Activated B cell treated with CpG ODN at 0.5 μM for 24 hours (primary cell): ENCODE measurements at regions of chr16 and their contacts with region 1.

Region 1: GRCh38 chr16:11356573-11357331 is 11.5 kb downstream of the RMI2 start:
- DNase-seq: peak; percentile 46
- ATAC-seq: peak; percentile 30
- H3K4me3 Mint-ChIP-seq: no peak overlapping the region
- H3K27ac Mint-ChIP-seq: no peak overlapping the region
- H3K4me1 Mint-ChIP-seq: peaks cover 58% of the 10 kb centered on the region
- H3K27me3 Mint-ChIP-seq: peaks cover 21% of the 10 kb centered on the region
- CTCF ChIP-seq: no peak

Region 2: DNA sequence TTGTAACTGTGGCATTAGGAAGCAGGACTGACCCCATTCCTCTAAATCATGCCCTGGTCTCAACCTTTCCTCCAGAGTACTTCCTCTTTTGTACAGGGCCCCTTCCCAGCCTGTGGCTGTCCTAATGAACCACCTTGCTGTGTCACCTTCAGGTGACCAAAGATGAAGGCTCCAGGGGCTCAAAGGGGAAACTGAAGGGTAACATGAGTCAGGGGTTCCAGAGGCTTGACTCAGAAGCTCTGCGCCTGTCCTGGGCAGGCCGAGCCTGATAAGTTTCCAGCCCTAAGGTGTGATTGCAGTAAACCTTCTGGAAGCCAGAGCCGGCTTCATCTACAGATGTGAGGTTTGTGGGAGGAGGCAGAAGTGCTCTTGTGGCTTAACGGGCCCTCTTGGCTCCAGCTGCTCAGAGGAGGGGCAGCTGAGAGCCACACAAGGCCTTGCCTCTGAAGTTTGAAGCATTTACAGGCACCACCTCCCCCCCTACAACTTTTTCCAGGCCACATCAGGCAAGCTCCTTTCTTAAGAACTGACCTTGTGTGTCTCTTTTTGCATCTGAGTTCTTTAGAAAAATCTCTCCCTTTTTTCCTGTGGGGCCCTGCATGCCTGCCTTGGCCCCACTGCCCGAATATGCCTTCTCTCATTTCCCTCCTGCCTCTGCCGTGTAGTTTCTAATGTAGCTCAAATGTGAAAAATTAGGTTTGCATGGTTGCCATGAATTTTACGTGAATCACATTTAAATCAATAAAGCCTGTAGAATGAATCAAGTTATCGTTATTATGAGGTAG is 262.5 kb before region 1 on chr16:
- CTCF ChIA-PET with region 1: no interaction called
- POLR2A ChIA-PET with region 1: no interaction called
- intact Hi-C with region 1: loop called (anchors 5 kb)
- DNase-seq: no peak
- ATAC-seq: peak; percentile 67
- H3K4me3 Mint-ChIP-seq: peak overlapping the region; percentile 68
- H3K27ac Mint-ChIP-seq: peak overlapping the region; percentile 94
- H3K4me1 Mint-ChIP-seq: peaks cover 40% of the 10 kb centered on the region
- H3K27me3 Mint-ChIP-seq: no peaks in the 10 kb centered on the region
- CTCF ChIP-seq: no peak

Region 3: GRCh38 chr16:11283820-11284248 is 72.9 kb before region 1 on chr16:
- CTCF ChIA-PET with region 1: interaction called, 3 read pairs
- POLR2A ChIA-PET with region 1: interaction called, 8 read pairs
- intact Hi-C with region 1: loop called (anchors 2 kb)
- DNase-seq: no peak
- ATAC-seq: no peak
- H3K4me3 Mint-ChIP-seq: no peak overlapping the region
- H3K27ac Mint-ChIP-seq: no peak overlapping the region
- H3K4me1 Mint-ChIP-seq: peaks cover 46% of the 10 kb centered on the region
- H3K27me3 Mint-ChIP-seq: no peaks in the 10 kb centered on the region
- CTCF ChIP-seq: no peak

Region 4: DNA sequence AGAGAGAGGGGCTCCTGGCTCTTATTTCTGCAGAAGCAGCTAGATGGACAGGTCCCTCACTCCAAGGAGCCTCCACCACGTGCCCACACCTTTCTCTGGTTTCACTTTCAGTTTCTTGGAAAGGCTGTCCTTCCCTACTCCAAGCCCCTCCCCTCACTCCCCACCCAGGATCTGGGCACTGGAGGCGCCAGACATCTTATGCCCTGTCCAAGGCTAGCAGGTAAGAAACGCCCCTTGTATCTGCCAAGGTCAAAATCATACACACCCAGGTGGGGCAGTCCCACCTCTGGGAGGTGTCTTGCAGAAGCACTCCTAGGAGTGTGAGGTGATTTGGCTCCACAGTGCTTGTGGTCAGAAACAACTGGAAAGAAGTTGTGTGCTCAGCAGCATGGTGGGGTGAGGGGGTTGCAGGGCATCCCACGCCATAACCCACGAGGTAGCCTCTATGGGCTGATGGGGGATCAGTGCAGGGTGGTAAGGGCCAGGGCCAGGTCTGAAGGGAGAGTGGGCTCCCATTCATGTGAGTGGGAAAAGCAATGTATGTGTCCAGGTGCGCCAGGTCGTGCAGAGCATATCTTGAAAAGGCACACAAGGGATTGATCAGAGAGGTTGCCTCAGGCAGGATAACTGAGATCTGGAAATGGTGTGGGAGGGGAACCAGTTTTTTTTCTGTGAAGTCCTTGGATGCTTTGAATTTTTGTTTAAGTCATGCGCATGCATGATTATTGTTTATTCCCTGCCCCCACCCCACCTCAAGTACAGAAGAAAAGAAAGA is 43.8 kb before region 1 on chr16:
- CTCF ChIA-PET with region 1: interaction called, 16 read pairs
- POLR2A ChIA-PET with region 1: interaction called, 21 read pairs
- intact Hi-C with region 1: loop called (anchors 1 kb)
- DNase-seq: no peak
- ATAC-seq: no peak
- H3K4me3 Mint-ChIP-seq: no peak overlapping the region
- H3K27ac Mint-ChIP-seq: peak overlapping the region; percentile 47
- H3K4me1 Mint-ChIP-seq: peaks cover 74% of the 10 kb centered on the region
- H3K27me3 Mint-ChIP-seq: no peaks in the 10 kb centered on the region
- CTCF ChIP-seq: no peak

Region 5: GRCh38 chr16:11345040-11345862 is 11.5 kb before region 1 on chr16 and contains the start of gene RMI2:
- CTCF ChIA-PET with region 1: no interaction called
- POLR2A ChIA-PET with region 1: interaction called, 18 read pairs
- intact Hi-C with region 1: loop called (anchors 1 kb)
- DNase-seq: peak; percentile 92
- ATAC-seq: peak; percentile 100
- H3K4me3 Mint-ChIP-seq: peak within 1 kb of the TSS; percentile 86
- H3K27ac Mint-ChIP-seq: peak within 1 kb of the TSS; percentile 80
- H3K4me1 Mint-ChIP-seq: peaks cover 37% of the 10 kb centered on the region
- H3K27me3 Mint-ChIP-seq: no peaks in the 10 kb centered on the region
- CTCF ChIP-seq: no peak
- total RNA-seq, gene RMI2: 8.1 TPM in 2 replicates